ENCODE measurements at regions of chr6 and their contacts with region 1.

Region 1: DNA sequence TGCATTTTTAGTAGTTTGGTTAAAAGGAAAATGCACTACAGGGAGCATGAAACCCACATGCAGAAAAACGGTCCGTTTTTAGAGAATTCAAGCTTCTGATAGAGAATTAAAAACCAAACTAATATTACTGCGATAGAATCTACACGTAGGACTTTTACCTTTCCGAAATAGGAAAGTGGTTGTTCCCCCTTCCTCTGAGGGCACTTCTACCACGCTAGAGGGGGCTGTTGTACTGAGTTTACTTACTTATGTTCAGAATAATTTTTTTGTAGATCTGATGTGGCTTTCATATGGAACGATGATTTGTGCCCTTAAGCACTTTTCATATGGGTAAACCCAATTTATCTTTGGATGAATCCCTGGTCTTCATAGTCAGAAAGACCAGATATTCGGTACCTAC is 264.3 kb upstream of the PLN start:
- DNase-seq: peak; percentile 70
- H3K4me3 ChIP-seq: no peak overlapping the region
- H3K27ac ChIP-seq: no peak overlapping the region
- H3K4me1 ChIP-seq: no peaks in the 10 kb centered on the region
- H3K27me3 ChIP-seq: no peaks in the 10 kb centered on the region
- CTCF ChIP-seq: peak; percentile 85

Region 2: DNA sequence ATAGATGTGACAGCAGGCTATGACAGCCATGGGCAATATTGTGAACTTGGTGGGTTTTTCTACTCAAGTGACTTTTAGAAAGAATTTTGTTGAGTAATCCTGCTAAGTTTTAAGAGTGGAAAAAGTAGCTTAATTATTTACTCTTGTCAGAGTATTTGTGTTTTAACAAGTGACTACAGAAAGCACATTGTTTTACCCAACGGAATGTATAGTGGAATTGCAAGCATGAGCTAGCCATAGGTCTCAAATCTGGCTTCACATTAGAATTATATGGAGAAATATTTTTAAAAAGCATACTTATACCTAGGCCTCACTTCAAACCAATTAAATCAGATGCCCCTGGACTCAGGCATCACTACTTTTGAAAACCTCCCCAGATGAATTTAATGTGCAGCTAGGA is 646.0 kb before region 1 on chr6:
- CTCF ChIA-PET with region 1: no interaction called
- POLR2A ChIA-PET with region 1: no interaction called
- intact Hi-C with region 1: no loop called
- DNase-seq: no peak
- H3K4me3 ChIP-seq: no peak overlapping the region
- H3K27ac ChIP-seq: no peak overlapping the region
- H3K4me1 ChIP-seq: no peaks in the 10 kb centered on the region
- H3K27me3 ChIP-seq: no peaks in the 10 kb centered on the region
- CTCF ChIP-seq: no peak

Region 3: DNA sequence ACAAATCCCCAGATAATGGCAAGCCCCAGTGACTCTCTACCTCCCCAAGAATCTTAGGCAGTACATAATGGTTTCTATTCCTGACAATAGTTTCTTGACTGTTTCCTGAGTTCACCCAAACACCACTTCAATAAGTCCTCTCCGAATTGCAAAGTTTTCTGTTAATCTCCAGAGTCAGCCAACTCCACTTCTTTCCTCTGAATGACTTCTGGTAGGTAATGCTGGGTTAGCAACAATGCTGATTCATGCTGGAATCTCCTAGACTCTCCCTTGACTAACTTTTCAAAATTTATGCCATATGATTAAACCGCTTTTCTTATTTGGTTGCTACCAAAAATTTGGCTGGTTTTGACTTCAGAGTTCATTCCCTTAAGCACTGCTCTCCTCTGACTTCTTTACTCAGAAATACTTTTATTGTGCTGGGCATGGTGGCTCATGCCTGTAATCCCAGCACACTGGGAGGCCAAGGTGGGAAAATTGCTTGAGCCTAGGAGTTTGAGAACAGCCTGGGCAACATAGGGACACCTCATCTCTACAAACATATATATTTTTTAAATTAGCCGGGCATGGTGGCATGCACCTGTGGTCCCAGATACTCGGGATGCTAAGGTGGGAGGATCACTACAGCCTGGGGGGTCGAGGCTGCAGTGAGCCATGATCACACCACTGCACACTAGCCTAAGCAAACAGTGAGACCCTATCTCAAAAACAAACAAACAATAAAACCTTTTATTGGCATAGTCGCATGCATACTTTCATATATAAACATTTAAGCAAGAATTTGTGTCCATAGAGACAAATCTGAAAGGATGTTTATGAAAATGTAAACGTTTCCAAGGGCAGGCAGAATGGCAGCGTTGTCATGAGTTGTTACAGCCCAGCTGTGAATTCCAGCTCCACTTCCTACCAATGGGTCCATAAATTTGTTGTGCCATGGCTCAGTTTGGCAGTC is 15.0 kb after region 1 on chr6:
- CTCF ChIA-PET with region 1: no interaction called
- POLR2A ChIA-PET with region 1: no interaction called
- intact Hi-C with region 1: no loop called
- DNase-seq: no peak
- H3K4me3 ChIP-seq: no peak overlapping the region
- H3K27ac ChIP-seq: no peak overlapping the region
- H3K4me1 ChIP-seq: no peaks in the 10 kb centered on the region
- H3K27me3 ChIP-seq: no peaks in the 10 kb centered on the region
- CTCF ChIP-seq: no peak

Region 4: GRCh38 chr6:118551063-118552053 is 267.6 kb after region 1 on chr6:
- CTCF ChIA-PET with region 1: no interaction called
- POLR2A ChIA-PET with region 1: no interaction called
- intact Hi-C with region 1: loop called (anchors 2 kb)
- DNase-seq: peak; percentile 67
- H3K4me3 ChIP-seq: no peak overlapping the region
- H3K27ac ChIP-seq: no peak overlapping the region
- H3K4me1 ChIP-seq: peaks cover 15% of the 10 kb centered on the region
- H3K27me3 ChIP-seq: no peaks in the 10 kb centered on the region
- CTCF ChIP-seq: peak; percentile 66

Region 5: DNA sequence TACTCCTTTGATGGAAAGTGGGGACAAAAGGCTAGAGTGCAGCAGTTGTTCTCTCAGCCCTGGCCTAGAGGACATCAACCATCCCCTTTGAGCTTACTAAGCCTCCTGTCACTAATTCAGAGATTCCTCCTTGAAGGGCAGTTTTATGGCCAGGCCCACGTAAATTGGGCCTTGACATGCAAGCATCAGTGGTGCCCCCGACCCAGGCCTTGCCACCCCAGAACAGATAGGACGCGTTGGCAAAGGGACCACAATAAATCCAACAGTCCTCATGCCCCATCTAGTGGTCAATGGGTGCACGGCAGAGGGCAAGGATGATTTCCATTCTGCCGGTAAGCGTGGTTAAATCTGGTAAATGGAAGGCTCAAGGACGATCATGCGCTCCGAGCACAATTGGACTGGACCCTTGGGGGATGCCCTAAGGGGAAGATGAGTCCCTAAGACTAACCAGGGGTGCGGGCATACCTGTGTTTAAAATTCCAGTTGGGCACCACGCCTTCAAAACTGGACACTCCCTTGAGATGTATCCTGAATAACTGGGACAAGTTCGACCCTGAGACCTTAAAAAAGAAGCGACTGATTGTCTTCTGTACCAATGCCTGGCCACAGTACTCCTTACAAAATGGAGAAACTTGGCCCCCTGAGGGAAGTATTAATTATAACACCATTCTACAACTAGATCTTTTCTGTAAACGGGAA is 335.1 kb after region 1 on chr6:
- CTCF ChIA-PET with region 1: no interaction called
- POLR2A ChIA-PET with region 1: no interaction called
- intact Hi-C with region 1: loop called (anchors 2 kb)
- DNase-seq: peak; percentile 63
- H3K4me3 ChIP-seq: no peak overlapping the region
- H3K27ac ChIP-seq: no peak overlapping the region
- H3K4me1 ChIP-seq: no peaks in the 10 kb centered on the region
- H3K27me3 ChIP-seq: no peaks in the 10 kb centered on the region
- CTCF ChIP-seq: peak; percentile 88

Region 6: GRCh38 chr6:118800394-118801071 is 516.8 kb after region 1 on chr6:
- CTCF ChIA-PET with region 1: no interaction called
- POLR2A ChIA-PET with region 1: no interaction called
- intact Hi-C with region 1: loop called (anchors 5 kb)
- DNase-seq: peak; percentile 90
- H3K4me3 ChIP-seq: peak overlapping the region; percentile 13
- H3K27ac ChIP-seq: no peak overlapping the region
- H3K4me1 ChIP-seq: no peaks in the 10 kb centered on the region
- H3K27me3 ChIP-seq: no peaks in the 10 kb centered on the region
- CTCF ChIP-seq: peak; percentile 94